PC-9 (cell line): ENCODE measurements at regions of chr3 and their contacts with region 1.

Region 1: GRCh38 chr3:27484015-27484844 is at the start of gene SLC4A7:
- DNase-seq: peak; percentile 89 to 98
- H3K4me3 ChIP-seq: peak within 1 kb of the TSS; percentile 77
- H3K27ac ChIP-seq: peak within 1 kb of the TSS; percentile 71
- H3K4me1 ChIP-seq: peaks cover 38% of the 10 kb centered on the region
- H3K27me3 ChIP-seq: no peaks in the 10 kb centered on the region
- CTCF ChIP-seq: no peak
- total RNA-seq, gene SLC4A7: 28.1 and 31.7 TPM in 2 replicates

Region 2: GRCh38 chr3:26997226-26997625 is 487.0 kb before region 1 on chr3:
- CTCF ChIA-PET with region 1: no interaction called
- POLR2A ChIA-PET with region 1: no interaction called
- intact Hi-C with region 1: no loop called
- DNase-seq: no peak
- H3K4me3 ChIP-seq: no peak overlapping the region
- H3K27ac ChIP-seq: no peak overlapping the region
- H3K4me1 ChIP-seq: no peaks in the 10 kb centered on the region
- H3K27me3 ChIP-seq: no peaks in the 10 kb centered on the region
- CTCF ChIP-seq: no peak

Region 3: GRCh38 chr3:27431116-27431515 is 53.1 kb before region 1 on chr3:
- CTCF ChIA-PET with region 1: no interaction called
- POLR2A ChIA-PET with region 1: no interaction called
- intact Hi-C with region 1: loop called (anchors 1 kb)
- DNase-seq: peak; percentile 65 to 86
- H3K4me3 ChIP-seq: no peak overlapping the region
- H3K27ac ChIP-seq: peak overlapping the region; percentile 39
- H3K4me1 ChIP-seq: peaks cover 15% of the 10 kb centered on the region; the same call in 1 of the 2 replicates
- H3K27me3 ChIP-seq: no peaks in the 10 kb centered on the region
- CTCF ChIP-seq: no peak

Region 4: DNA sequence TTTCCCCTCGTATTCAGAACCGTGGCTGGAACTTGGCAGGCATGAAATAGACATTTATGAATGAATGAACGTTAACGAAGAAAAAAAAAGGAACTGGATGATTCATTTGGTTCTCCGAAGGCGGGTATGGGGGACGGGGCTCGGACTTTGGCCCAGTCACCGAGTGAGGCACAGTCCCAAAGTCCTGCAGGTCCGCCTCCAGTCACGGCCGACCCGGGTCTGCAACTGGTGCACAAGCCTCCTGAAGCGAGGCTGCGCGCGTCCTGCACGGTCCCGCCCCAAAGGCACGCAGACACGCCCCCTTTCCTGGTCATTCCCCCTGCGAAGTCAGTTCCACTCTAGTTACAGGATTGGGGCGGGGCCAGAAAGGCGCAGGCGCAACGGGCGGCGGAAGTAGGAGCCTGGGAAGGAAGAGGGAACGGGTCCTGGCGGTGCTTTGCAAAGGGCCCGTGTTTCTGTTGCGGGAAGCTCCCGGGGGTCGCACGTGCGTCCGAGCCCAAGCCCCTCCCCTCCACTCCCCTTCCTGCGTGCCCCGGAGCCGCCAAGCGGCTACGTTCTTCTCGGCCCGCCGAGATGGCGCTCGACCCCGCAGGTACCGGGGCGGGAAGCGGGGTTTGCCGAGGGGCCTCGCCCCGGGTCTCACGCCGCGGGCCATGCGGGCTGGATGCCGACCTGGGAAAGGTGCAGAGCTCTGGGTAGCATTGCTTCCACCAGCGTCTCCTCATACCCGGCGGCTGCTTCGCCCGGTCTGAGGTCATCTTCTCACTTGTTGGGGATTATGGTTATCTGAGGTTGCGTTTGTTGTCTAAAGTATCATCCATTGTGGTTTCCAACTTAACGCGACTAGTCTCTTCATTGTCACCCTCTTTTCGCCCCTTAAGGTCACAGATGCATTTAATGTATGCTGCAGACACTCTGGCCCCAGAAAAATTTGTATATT is 757.3 kb after region 1 on chr3 and contains the start of gene CMC1:
- CTCF ChIA-PET with region 1: no interaction called
- POLR2A ChIA-PET with region 1: no interaction called
- intact Hi-C with region 1: loop called (anchors 5 kb)
- DNase-seq: peak; percentile 85 to 96
- H3K4me3 ChIP-seq: peak within 1 kb of the TSS; percentile 80
- H3K27ac ChIP-seq: peak within 1 kb of the TSS; percentile 59
- H3K4me1 ChIP-seq: peaks cover 16% of the 10 kb centered on the region; the same call in 1 of the 2 replicates
- H3K27me3 ChIP-seq: no peaks in the 10 kb centered on the region
- CTCF ChIP-seq: no peak
- total RNA-seq, gene CMC1: 26.7 and 33.8 TPM in 2 replicates